CD8-positive, alpha-beta T cell (primary cell): ENCODE measurements at regions of chr18 and their contacts with region 1.

Region 1: DNA sequence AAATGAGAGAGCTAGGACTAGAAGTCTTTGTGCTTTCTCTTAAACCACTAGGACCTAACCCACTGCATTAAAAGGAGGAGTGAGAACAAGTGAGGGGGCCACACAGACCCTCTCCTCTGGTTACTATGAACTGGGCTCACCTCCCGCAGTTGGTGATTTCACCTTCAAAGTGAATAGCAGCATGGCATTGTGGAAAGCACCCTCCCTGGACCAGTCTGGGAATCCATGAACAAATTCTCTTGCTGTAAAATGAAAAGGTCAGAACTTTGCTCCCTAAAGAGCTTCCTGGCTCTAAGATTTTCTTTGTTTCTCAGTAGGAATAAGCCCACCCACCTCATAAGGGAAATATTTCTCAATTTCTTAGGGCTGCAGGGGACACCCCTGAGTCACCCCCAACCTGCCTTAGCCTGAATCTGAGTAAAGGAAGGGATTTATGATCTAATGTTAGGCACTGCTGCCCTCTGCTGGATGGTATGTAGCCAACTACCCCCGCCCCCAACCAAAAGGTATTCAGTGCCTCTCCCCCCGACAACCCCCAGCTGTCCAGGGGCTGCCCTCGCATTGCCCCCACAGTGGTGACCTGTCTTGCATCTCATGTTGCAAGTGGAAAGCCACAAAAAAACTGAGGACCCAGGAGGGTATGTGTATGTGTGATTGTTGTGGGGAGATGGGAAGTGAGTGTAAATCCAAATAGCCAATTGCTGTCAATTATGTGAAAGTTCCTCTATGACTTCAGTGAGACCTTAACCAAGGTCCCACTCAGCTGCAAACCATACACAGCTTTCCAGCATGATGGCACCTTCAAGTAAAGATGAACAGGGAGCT is 230.9 kb upstream of the SLC14A2 start:
- DNase-seq: peak in 7 of 9 experiments; percentile 0 to 60 (median 25)
- ATAC-seq: no peak
- H3K4me3 ChIP-seq: no peak overlapping the region
- H3K4me3 Mint-ChIP-seq: no peak overlapping the region
- H3K27ac ChIP-seq: no peak overlapping the region
- H3K27ac Mint-ChIP-seq: no peak overlapping the region
- H3K4me1 ChIP-seq: no peaks in the 10 kb centered on the region
- H3K4me1 Mint-ChIP-seq: no peaks in the 10 kb centered on the region
- H3K27me3 ChIP-seq: peaks cover 0 to 3% of the 10 kb centered on the region in 2 experiments
- H3K27me3 Mint-ChIP-seq: peaks cover 16% of the 10 kb centered on the region
- CTCF ChIP-seq: peak; percentile 34

Region 2: GRCh38 chr18:43571078-43571689 is 1813.2 kb before region 1 on chr18:
- CTCF ChIA-PET with region 1: interaction called, 3 read pairs
- POLR2A ChIA-PET with region 1: no interaction called
- intact Hi-C with region 1: loop called in 1 of 2 experiments (anchors 5 kb)
- DNase-seq: peak in 2 of 9 experiments; percentile 14 to 17
- ATAC-seq: no peak
- H3K4me3 ChIP-seq: no peak overlapping the region
- H3K4me3 Mint-ChIP-seq: no peak overlapping the region
- H3K27ac ChIP-seq: no peak overlapping the region
- H3K27ac Mint-ChIP-seq: no peak overlapping the region
- H3K4me1 ChIP-seq: no peaks in the 10 kb centered on the region
- H3K4me1 Mint-ChIP-seq: no peaks in the 10 kb centered on the region
- H3K27me3 ChIP-seq: no peaks in the 10 kb centered on the region
- H3K27me3 Mint-ChIP-seq: no peaks in the 10 kb centered on the region
- CTCF ChIP-seq: peak; percentile 27

Region 3: GRCh38 chr18:43620936-43621335 is 1763.4 kb before region 1 on chr18:
- CTCF ChIA-PET with region 1: interaction called, 5 read pairs
- POLR2A ChIA-PET with region 1: no interaction called
- intact Hi-C with region 1: loop called in 1 of 2 experiments (anchors 2 kb)
- DNase-seq: peak in 2 of 9 experiments; percentile 4 to 14
- ATAC-seq: no peak
- H3K4me3 ChIP-seq: no peak overlapping the region
- H3K4me3 Mint-ChIP-seq: no peak overlapping the region
- H3K27ac ChIP-seq: no peak overlapping the region
- H3K27ac Mint-ChIP-seq: no peak overlapping the region
- H3K4me1 ChIP-seq: no peaks in the 10 kb centered on the region
- H3K4me1 Mint-ChIP-seq: no peaks in the 10 kb centered on the region
- H3K27me3 ChIP-seq: no peaks in the 10 kb centered on the region
- H3K27me3 Mint-ChIP-seq: no peaks in the 10 kb centered on the region
- CTCF ChIP-seq: peak; percentile 29

Region 4: GRCh38 chr18:45324495-45325113 is 59.7 kb before region 1 on chr18:
- CTCF ChIA-PET with region 1: no interaction called
- POLR2A ChIA-PET with region 1: no interaction called
- intact Hi-C with region 1: no loop called
- DNase-seq: no peak
- ATAC-seq: no peak
- H3K4me3 ChIP-seq: no peak overlapping the region
- H3K4me3 Mint-ChIP-seq: no peak overlapping the region
- H3K27ac ChIP-seq: no peak overlapping the region
- H3K27ac Mint-ChIP-seq: no peak overlapping the region
- H3K4me1 ChIP-seq: no peaks in the 10 kb centered on the region
- H3K4me1 Mint-ChIP-seq: no peaks in the 10 kb centered on the region
- H3K27me3 ChIP-seq: no peaks in the 10 kb centered on the region
- H3K27me3 Mint-ChIP-seq: peaks cover 2% of the 10 kb centered on the region
- CTCF ChIP-seq: no peak

Region 5: DNA sequence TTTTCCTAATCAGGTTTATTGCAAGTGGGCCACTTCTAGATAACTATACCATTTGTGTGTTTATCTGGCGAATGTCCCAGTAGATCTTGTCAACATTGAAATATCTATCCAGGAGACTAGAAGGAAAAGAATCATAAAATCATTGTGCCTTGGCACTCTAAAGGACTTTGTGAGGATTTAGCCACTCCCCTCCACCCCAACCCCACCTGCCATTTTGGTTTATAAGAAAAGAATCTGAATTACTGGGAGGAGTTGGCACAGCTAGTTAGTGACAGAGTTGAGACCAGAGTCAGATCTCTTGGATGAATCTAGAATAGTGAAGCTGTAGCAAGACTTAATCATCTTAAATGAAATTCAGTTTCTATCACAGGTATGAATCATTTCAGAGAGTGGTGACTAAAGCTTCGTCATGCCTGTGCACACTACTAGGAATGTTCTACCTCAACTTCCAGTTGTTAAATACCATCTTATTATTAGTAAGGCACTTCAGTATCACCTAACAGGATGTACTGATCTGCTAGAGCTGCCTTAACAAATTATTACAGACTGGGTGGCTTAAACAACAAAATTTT is 18.2 kb after region 1 on chr18:
- CTCF ChIA-PET with region 1: no interaction called
- POLR2A ChIA-PET with region 1: no interaction called
- intact Hi-C with region 1: no loop called
- DNase-seq: no peak
- ATAC-seq: no peak
- H3K4me3 ChIP-seq: no peak overlapping the region
- H3K4me3 Mint-ChIP-seq: no peak overlapping the region
- H3K27ac ChIP-seq: no peak overlapping the region
- H3K27ac Mint-ChIP-seq: no peak overlapping the region
- H3K4me1 ChIP-seq: no peaks in the 10 kb centered on the region
- H3K4me1 Mint-ChIP-seq: no peaks in the 10 kb centered on the region
- H3K27me3 ChIP-seq: no peaks in the 10 kb centered on the region
- H3K27me3 Mint-ChIP-seq: peaks cover 2% of the 10 kb centered on the region
- CTCF ChIP-seq: no peak